Breast epithelium (tissue), 4 donors: ENCODE measurements at regions of chr2 and their contacts with region 1.

Region 1: DNA sequence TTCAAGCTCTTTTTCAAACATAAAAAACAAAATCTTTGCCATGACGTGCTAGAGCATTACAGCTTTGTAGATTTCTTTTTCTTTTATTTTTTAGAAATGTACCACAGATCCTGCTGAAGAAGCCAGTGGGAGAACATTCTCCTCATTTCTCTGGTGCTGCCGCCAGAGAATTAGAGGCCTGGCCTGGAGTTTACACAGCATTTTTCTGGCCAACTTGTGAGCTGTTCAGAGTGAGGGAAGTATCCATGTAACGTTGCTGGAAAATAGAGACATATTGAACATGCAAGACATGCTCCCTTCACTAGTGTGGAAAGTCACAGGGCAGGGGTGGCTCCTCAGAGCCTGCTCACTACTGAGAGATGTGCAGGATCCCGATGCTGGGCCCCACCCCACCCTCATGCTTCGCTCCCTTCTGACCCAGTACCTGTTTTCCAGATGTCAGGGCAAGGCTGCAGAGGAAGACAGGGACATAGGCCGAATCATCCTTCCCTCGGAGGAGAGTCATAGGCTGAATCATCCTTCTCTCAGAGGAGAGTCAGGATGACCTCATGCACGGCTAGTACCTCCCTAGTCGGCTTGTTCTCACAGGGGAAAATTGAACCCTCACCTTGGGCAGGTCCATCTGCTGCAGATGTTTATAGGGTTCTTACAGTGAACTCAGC is 298.5 kb downstream of the INSIG2 start:
- DNase-seq: no peak
- H3K4me3 ChIP-seq: no peak overlapping the region
- H3K27ac ChIP-seq: no peak overlapping the region
- H3K4me1 ChIP-seq: no peaks in the 10 kb centered on the region
- H3K27me3 ChIP-seq: no peaks in the 10 kb centered on the region
- CTCF ChIP-seq: no peak
- POLR2A ChIP-seq: no peak

Region 2: GRCh38 chr2:119513832-119514231 is 1127.1 kb after region 1 on chr2:
- intact Hi-C with region 1: loop called (anchors 5 kb)
- DNase-seq: no peak
- H3K4me3 ChIP-seq: no peak overlapping the region
- H3K27ac ChIP-seq: no peak overlapping the region
- H3K4me1 ChIP-seq: no peaks in the 10 kb centered on the region
- H3K27me3 ChIP-seq: peaks cover 0 to 6% of the 10 kb centered on the region in 2 donors
- CTCF ChIP-seq: no peak
- POLR2A ChIP-seq: no peak